Calu3 (cell line): ENCODE measurements at regions of chr3 and their contacts with region 1.

Region 1: DNA sequence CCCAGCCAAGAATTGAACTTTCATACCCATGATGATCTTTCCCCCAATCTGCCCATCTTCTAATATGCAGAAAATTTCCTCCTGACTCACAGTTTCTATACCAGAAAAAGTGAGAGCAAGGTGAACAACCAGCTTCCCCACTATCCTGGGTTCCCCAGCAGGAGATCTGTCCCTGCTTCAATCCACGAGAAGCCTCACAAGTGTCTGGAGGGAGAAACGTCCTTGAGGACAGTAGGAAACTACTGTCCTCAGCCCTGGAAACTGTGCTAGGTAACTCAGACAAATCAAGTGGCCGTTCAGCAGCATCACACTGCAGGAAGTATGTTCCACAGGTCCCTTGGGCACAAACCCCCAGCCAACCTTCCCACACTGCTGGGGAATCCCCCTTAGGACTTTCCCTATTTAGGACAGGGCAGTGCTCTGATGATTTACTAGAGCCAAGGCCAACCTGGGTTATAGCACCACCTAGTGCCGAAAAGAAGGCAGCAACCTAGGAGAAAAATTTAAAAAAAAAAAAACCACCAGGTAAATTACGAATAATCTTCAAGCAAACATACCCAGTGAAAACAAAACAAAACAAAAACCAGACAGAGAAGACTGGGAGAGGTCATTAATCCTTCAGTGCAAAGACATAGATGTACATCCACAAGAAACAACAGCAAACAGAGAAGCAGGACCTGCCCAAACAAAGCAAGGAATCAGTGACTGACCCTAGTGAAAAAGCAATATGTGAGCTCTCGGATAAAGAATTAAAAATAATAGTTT is 36.0 kb downstream of the MORC1 start:
- DNase-seq: peak; percentile 75
- H3K4me3 Mint-ChIP-seq: no peak overlapping the region
- H3K27ac Mint-ChIP-seq: peak overlapping the region; percentile 19
- H3K4me1 Mint-ChIP-seq: peaks cover 12% of the 10 kb centered on the region
- H3K27me3 Mint-ChIP-seq: peaks cover 11% of the 10 kb centered on the region
- CTCF ChIP-seq: peak; percentile 68

Region 2: GRCh38 chr3:108489771-108490170 is 592.2 kb before region 1 on chr3:
- CTCF ChIA-PET with region 1: no interaction called
- intact Hi-C with region 1: loop called (anchors 10 kb)
- DNase-seq: peak; percentile 18
- H3K4me3 Mint-ChIP-seq: no peak overlapping the region
- H3K27ac Mint-ChIP-seq: no peak overlapping the region
- H3K4me1 Mint-ChIP-seq: no peaks in the 10 kb centered on the region
- H3K27me3 Mint-ChIP-seq: no peaks in the 10 kb centered on the region
- CTCF ChIP-seq: peak; percentile 62

Region 3: GRCh38 chr3:108662130-108662738 is 419.7 kb before region 1 on chr3:
- CTCF ChIA-PET with region 1: no interaction called
- intact Hi-C with region 1: loop called (anchors 1 kb)
- DNase-seq: peak; percentile 60
- H3K4me3 Mint-ChIP-seq: no peak overlapping the region
- H3K27ac Mint-ChIP-seq: no peak overlapping the region
- H3K4me1 Mint-ChIP-seq: no peaks in the 10 kb centered on the region
- H3K27me3 Mint-ChIP-seq: no peaks in the 10 kb centered on the region
- CTCF ChIP-seq: peak; percentile 23

Region 4: GRCh38 chr3:108914774-108915641 is 166.9 kb before region 1 on chr3:
- CTCF ChIA-PET with region 1: no interaction called
- intact Hi-C with region 1: loop called (anchors 5 kb)
- DNase-seq: peak; percentile 60
- H3K4me3 Mint-ChIP-seq: no peak overlapping the region
- H3K27ac Mint-ChIP-seq: no peak overlapping the region
- H3K4me1 Mint-ChIP-seq: peaks cover 31% of the 10 kb centered on the region
- H3K27me3 Mint-ChIP-seq: peaks cover 10% of the 10 kb centered on the region
- CTCF ChIP-seq: peak; percentile 67

Region 5: GRCh38 chr3:109023656-109024254 is 58.2 kb before region 1 on chr3:
- CTCF ChIA-PET with region 1: interaction called, 4 read pairs
- intact Hi-C with region 1: loop called (anchors 1 kb)
- DNase-seq: peak; percentile 49
- H3K4me3 Mint-ChIP-seq: no peak overlapping the region
- H3K27ac Mint-ChIP-seq: no peak overlapping the region
- H3K4me1 Mint-ChIP-seq: no peaks in the 10 kb centered on the region
- H3K27me3 Mint-ChIP-seq: peaks cover 8% of the 10 kb centered on the region
- CTCF ChIP-seq: no peak

Region 6: DNA sequence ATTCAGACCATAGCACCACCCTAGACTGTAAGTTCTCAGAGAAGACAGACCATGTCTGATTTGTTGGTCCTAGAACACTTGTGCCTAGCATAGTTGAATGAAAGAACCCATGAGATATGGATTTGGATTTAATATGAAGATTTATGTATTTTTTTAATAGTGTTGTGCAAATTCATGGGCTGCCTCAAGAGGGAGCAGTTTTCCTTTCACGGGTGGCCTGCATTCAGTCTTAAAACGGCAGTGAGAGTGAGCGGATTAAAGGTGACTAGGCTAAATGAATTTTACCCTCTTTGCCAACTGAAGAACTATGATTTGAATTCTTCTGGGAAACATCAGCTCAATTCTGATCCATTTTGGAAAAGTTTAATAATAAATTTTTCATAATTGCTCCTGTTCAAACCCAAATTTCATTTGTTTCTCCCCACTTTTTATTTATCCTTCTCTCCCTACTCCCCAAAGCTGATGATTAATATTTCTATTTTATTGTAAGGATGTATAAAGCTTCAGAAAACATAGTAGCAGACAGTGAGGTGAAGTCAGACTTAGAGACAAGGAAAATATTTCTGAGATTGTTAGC is 31.2 kb before region 1 on chr3:
- CTCF ChIA-PET with region 1: no interaction called
- intact Hi-C with region 1: loop called (anchors 1 kb)
- DNase-seq: peak; percentile 41
- H3K4me3 Mint-ChIP-seq: no peak overlapping the region
- H3K27ac Mint-ChIP-seq: no peak overlapping the region
- H3K4me1 Mint-ChIP-seq: peaks cover 7% of the 10 kb centered on the region
- H3K27me3 Mint-ChIP-seq: no peaks in the 10 kb centered on the region
- CTCF ChIP-seq: peak; percentile 51

Region 7: GRCh38 chr3:109117939-109118338 is 36.0 kb after region 1 on chr3 and contains the start of gene MORC1:
- CTCF ChIA-PET with region 1: no interaction called
- intact Hi-C with region 1: no loop called
- DNase-seq: no peak
- H3K4me3 Mint-ChIP-seq: no peak within 1 kb of the TSS
- H3K27ac Mint-ChIP-seq: no peak within 1 kb of the TSS
- H3K4me1 Mint-ChIP-seq: peaks cover 24% of the 10 kb centered on the region
- H3K27me3 Mint-ChIP-seq: no peaks in the 10 kb centered on the region
- CTCF ChIP-seq: no peak
- total RNA-seq, gene MORC1: not detected in 2 replicates